ENCODE measurements at regions of chr7 and their contacts with region 1.

Region 1: DNA sequence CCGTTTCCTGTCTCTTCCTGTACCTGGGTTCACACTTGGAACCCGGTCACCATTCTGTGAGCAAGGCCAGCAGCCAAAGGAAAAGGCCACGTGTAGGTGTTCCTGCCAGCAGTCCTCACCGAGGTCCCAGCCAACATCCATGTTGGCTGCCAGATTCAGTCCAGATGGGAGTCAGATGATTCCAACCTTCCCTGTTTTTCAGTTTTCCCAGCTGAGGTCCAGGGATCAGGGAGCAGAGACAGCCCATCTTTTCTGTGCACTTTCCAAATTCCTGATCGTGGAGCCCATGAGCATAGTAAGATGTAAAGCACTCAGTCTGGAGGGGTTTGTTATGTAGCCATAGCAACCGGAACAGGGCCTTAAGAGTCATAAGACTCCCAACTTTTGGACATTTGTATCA is 3.9 kb upstream of the PVRIG start:
- DNase-seq: no peak
- ATAC-seq: no peak

Region 2: GRCh38 chr7:100132697-100133151 is 83.2 kb before region 1 on chr7:
- intact Hi-C with region 1: loop called in 1 of 2 experiments (anchors 2 kb)
- DNase-seq: peak; percentile 55 to 73
- ATAC-seq: peak; percentile 69

Measured in left colon (tissue), 2 donors.